Gastrocnemius medialis (tissue), 4 donors: ENCODE measurements at regions of chr18 and their contacts with region 1.

Region 1: DNA sequence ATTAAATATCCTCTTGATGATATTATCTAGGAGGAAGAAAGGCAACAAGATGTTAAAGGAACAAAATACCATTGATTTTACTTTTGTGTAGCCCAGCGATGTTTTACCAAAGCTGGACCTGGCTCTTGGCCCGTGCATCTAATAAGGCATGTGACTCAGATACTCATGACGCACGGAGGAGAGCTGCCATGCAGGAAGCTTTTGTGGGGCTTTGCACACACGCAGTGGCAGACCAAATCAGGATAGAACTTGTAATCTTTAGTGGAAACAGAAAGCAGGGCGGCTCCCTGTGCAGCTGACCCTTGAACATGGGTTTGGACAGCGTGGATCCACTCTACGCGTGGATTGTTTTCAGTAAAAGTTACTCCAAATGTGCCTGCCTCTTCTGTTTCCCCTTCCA is 190.0 kb downstream of the NAPG start:
- DNase-seq: no peak
- ATAC-seq: no peak
- H3K4me3 ChIP-seq: no peak overlapping the region
- H3K27ac ChIP-seq: no peak overlapping the region
- H3K4me1 ChIP-seq: no peaks in the 10 kb centered on the region
- H3K27me3 ChIP-seq: no peaks in the 10 kb centered on the region
- CTCF ChIP-seq: no peak
- POLR2A ChIP-seq: no peak

Region 2: DNA sequence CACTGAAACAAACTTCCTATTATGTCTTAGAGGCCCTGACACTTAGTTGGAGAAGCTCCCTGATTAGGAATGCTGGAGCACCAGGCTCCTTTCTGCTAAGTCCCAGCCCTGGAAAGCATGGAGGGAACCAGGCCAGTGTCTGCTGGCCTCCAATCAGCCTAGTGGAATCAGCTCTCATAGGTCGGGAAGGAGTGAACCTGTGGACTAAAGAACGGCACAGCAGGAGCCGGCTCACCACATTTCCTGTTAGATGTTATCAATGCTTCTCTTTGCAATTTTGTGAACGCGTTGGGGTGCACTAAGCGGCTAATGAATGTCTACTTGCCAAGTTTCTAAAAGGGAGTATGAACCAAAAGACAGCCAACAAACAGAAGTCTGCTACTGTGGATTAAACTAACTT is 106.7 kb after region 1 on chr18:
- in situ Hi-C with region 1: loop called in 1 of 4 experiments (anchors 25 kb)
- intact Hi-C with region 1: no loop called
- DNase-seq: no peak
- ATAC-seq: no peak
- H3K4me3 ChIP-seq: no peak overlapping the region
- H3K27ac ChIP-seq: no peak overlapping the region
- H3K4me1 ChIP-seq: no peaks in the 10 kb centered on the region
- H3K27me3 ChIP-seq: no peaks in the 10 kb centered on the region
- CTCF ChIP-seq: no peak
- POLR2A ChIP-seq: no peak